GM10248 (cell line): ENCODE measurements at regions of chr7 and their contacts with region 1.

Region 1: DNA sequence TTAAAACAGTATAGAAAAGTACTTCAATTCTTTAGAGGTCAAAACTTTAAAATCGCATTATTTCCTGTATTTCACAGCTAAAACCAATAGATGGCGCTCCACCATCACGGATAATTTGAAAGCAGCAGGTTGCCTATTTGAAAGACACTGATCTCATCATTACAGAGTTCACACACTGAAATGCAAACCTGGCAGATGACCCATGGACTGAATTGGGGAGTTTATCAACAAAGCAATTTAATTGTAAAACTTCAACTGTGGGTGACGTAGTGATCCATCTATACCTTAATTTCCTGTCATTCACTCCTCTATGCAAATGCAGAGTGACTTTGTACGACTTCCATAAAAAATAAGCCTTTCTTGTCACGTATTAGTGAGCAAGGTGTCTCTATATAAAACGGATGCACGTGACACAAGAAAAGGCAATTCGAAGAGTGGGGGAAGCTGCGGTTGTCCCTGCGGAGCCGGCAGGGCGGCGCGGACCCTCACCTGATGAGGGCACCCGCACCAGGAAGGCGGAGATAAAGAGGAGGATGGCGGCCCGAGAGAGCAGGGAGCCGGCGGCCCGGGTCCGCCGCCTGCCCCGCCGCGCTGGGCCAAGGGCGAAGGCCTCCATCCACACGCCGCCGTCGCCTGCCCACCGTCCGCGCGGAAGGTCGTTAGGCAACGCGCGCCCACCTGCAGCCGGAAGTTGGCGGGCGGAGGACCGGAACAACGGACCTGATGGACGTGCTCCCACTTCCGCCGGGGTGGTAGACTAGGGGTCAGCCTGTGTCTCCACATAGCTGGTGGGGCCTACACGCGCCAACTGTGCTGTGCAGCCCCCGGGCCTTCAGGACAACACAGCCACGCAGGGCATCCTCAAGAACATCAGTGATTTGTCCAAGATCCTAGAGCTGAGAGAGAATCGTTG is at the start of gene ZPBP:
- DNase-seq: peak; percentile 54
- CTCF ChIP-seq: peak; percentile 74

Region 2: DNA sequence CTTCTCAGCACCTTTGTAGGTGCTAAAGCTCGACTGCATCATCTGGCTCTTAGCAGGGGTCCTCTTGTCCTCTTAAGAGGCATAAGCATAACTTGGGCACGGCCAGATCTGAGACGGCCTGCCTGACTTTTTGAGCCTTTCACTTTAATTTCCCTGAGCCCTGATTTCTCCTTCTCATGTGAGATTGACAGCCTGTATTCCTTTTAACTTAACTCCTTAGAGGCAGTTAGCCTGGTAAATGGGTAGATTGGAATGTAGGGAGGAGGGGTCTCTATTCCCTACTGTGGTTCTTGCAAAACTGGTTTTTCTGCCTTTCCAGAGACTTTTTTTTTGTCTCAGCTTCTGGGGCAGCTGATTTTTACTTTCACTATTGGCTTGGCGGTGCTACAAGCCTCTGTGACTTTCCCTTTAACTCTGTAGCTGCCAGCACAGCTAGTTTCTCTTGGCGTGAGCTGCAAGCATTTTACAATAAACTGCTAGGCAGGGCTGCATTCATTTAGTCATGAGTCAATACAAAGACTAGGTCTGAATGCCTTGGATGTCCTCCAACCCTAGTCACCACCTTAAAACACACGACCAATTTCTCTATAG is 23.8 kb before region 1 on chr7:
- CTCF ChIA-PET with region 1: interaction called, 14 read pairs
- POLR2A ChIA-PET with region 1: no interaction called
- DNase-seq: no peak
- CTCF ChIP-seq: no peak

Region 3: GRCh38 chr7:50112250-50112975 is 19.6 kb after region 1 on chr7:
- CTCF ChIA-PET with region 1: interaction called, 11 read pairs
- POLR2A ChIA-PET with region 1: no interaction called
- DNase-seq: no peak
- CTCF ChIP-seq: no peak

Region 4: DNA sequence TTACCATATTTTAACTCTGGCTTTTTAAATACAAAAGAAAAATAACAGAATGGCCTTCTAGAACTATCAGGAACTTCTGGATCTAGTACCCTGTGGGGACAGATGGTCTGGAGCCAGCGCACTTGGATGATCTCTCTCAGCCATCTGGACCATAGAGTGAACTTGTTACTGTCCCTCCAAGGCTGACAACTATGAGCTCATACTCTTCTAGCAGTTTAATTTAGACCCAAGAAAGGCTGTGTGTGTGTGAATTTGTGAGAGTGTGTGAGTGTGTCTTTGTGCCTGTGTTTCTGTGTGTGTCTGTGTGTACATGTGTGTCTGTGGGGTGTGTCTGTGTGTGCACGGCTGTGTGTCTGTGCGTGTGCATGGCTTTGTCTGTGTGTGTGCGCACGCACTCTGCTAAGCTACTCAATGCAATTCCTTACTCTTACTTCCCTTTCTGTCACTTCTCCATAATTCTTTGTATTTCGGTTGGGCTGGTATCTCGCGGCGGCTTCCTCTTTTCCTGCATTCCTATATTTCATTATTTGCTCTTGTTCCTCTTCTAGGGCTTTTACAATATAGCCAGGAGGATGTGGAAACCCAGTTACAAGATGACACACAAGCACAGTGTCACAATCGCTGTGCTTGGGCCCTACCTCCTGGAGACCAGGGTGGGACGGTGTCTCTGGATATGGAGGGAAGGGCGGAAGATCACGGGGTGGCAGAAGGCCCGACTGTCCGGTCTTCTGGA is 263.5 kb after region 1 on chr7:
- CTCF ChIA-PET with region 1: no interaction called
- POLR2A ChIA-PET with region 1: no interaction called
- DNase-seq: no peak
- CTCF ChIP-seq: no peak